CD4-positive, alpha-beta T cell (primary cell): ENCODE measurements at regions of chr15 and their contacts with region 1.

Region 1: DNA sequence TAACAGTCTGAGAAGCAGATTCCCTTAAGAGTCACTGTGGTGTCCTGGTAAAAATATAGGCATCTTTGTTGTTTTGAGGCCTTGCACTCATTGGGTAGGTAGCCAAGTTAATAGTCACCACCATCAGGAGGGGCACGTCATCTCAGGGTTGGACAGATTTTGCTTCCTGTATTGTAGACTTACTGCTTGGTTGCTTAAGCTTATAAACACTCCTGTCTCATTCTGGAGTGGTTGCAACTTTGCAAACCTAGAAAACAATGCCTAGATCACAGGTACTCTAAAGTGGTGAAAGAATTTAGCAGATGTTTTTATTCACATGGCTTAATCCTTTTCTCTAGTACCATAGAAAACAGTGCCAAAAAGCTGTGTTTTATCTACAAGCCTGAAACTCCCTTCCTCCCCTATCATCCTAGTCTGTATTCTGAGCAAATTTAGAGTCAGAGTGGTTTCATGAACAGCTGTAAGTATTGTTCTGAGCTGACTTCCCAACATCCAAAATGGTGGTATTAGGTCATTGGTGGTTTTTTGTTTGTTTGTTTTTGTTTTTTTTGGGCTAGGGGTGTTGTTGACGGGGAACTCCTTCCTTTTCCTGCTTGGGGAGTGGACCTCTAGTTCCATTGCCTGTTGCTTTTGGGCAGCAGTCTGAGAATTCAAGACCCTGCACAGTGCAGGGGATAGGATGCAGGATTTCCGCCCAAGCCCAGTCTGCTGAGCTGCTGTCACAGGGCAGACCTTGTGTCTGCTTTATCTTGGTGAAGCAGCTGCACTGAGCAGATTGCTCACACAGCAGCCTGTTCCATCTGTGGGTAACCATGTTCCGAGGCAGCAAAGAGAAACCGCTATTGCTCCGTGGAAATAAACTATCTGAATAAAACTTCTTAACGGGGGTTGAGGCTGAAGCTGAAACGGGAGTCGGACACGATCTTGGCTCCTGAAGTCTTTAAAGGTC is 202.0 kb downstream of the AKAP13 start:
- DNase-seq: peak; percentile 43 to 84 (median 66)
- ATAC-seq: peak; percentile 71
- H3K4me3 ChIP-seq: peak overlapping the region; percentile 62
- H3K4me3 Mint-ChIP-seq: peak overlapping the region; percentile 87
- H3K27ac ChIP-seq: peak overlapping the region; percentile 86 to 96
- H3K27ac Mint-ChIP-seq: peak overlapping the region; percentile 100
- H3K4me1 ChIP-seq: peaks cover 64% of the 10 kb centered on the region
- H3K4me1 Mint-ChIP-seq: peaks cover 79% of the 10 kb centered on the region
- H3K27me3 ChIP-seq: no peaks in the 10 kb centered on the region
- H3K27me3 Mint-ChIP-seq: no peaks in the 10 kb centered on the region
- CTCF ChIP-seq: no peak

Region 2: GRCh38 chr15:85543741-85544155 is 38.7 kb before region 1 on chr15:
- CTCF ChIA-PET with region 1: interaction called, 6 read pairs
- POLR2A ChIA-PET with region 1: interaction called, 10 read pairs
- intact Hi-C with region 1: loop called in 1 of 2 experiments (anchors 2 kb)
- DNase-seq: peak in 13 of 14 experiments; percentile 5 to 72 (median 37)
- ATAC-seq: peak; percentile 90
- H3K4me3 ChIP-seq: peak overlapping the region; percentile 18
- H3K4me3 Mint-ChIP-seq: peak overlapping the region; percentile 52
- H3K27ac ChIP-seq: no peak overlapping the region
- H3K27ac Mint-ChIP-seq: peak overlapping the region; percentile 77
- H3K4me1 ChIP-seq: peaks cover 14% of the 10 kb centered on the region
- H3K4me1 Mint-ChIP-seq: peaks cover 82% of the 10 kb centered on the region
- H3K27me3 ChIP-seq: no peaks in the 10 kb centered on the region
- H3K27me3 Mint-ChIP-seq: no peaks in the 10 kb centered on the region
- CTCF ChIP-seq: peak; percentile 19

Region 3: DNA sequence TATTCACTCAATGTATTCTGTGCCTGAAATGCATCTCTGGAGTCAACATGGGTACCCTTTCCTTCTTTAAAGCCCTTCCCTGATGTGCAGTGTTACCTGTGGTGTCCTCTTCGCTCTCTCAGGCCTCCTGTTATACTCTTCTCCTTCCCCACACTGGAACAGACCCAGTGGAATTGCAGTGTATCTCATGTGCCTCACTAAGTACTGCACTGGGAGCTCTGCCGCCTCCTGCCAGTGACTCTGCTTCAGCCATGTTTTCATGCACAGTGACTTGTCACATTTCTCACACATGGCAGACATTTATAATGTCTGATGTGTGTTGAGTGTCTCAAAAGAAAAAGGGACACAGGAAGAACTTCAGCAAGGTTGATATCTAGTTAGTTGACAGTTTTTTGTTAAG is 21.3 kb after region 1 on chr15:
- CTCF ChIA-PET with region 1: no interaction called
- POLR2A ChIA-PET with region 1: interaction called, 11 read pairs
- intact Hi-C with region 1: no loop called
- DNase-seq: no peak
- ATAC-seq: no peak
- H3K4me3 ChIP-seq: no peak overlapping the region
- H3K4me3 Mint-ChIP-seq: no peak overlapping the region
- H3K27ac ChIP-seq: no peak overlapping the region
- H3K27ac Mint-ChIP-seq: no peak overlapping the region
- H3K4me1 ChIP-seq: peaks cover 8% of the 10 kb centered on the region
- H3K4me1 Mint-ChIP-seq: peaks cover 40% of the 10 kb centered on the region
- H3K27me3 ChIP-seq: no peaks in the 10 kb centered on the region
- H3K27me3 Mint-ChIP-seq: no peaks in the 10 kb centered on the region
- CTCF ChIP-seq: no peak

Region 4: DNA sequence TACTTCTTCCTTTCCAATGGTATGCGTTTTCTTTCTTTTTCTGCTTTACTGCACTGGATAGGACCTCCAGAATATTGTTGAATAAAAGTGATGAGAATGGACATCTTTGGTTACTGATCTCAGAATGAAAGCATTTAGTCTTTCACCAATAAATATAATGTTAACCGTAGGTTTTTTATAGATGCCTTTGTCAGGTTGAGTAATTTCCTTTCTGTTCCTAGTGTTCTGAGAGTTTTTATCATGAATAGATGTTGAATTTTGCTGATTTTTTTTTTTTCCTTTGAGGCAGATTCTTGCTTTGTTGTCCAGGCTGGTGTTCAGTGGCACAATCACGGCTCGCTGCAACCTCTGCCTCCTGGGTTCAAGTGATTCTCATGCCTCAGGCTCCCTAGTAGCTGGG is 53.9 kb after region 1 on chr15:
- CTCF ChIA-PET with region 1: no interaction called
- POLR2A ChIA-PET with region 1: no interaction called
- intact Hi-C with region 1: no loop called
- DNase-seq: no peak
- ATAC-seq: no peak
- H3K4me3 ChIP-seq: no peak overlapping the region
- H3K4me3 Mint-ChIP-seq: no peak overlapping the region
- H3K27ac ChIP-seq: no peak overlapping the region
- H3K27ac Mint-ChIP-seq: no peak overlapping the region
- H3K4me1 ChIP-seq: no peaks in the 10 kb centered on the region
- H3K4me1 Mint-ChIP-seq: peaks cover 36% of the 10 kb centered on the region
- H3K27me3 ChIP-seq: no peaks in the 10 kb centered on the region
- H3K27me3 Mint-ChIP-seq: no peaks in the 10 kb centered on the region
- CTCF ChIP-seq: no peak

Region 5: GRCh38 chr15:85646538-85647091 is 64.2 kb after region 1 on chr15:
- CTCF ChIA-PET with region 1: no interaction called
- POLR2A ChIA-PET with region 1: interaction called, 19 read pairs
- intact Hi-C with region 1: loop called in 1 of 2 experiments (anchors 5 kb)
- DNase-seq: peak in 6 of 14 experiments; percentile 7 to 81 (median 48)
- ATAC-seq: peak; percentile 85
- H3K4me3 ChIP-seq: no peak overlapping the region
- H3K4me3 Mint-ChIP-seq: peak overlapping the region; percentile 9
- H3K27ac ChIP-seq: peak overlapping the region in 1 of 2 donors; percentile 71
- H3K27ac Mint-ChIP-seq: peak overlapping the region; percentile 73
- H3K4me1 ChIP-seq: peaks cover 40% of the 10 kb centered on the region
- H3K4me1 Mint-ChIP-seq: peaks cover 61% of the 10 kb centered on the region
- H3K27me3 ChIP-seq: no peaks in the 10 kb centered on the region
- H3K27me3 Mint-ChIP-seq: no peaks in the 10 kb centered on the region
- CTCF ChIP-seq: no peak

Region 6: DNA sequence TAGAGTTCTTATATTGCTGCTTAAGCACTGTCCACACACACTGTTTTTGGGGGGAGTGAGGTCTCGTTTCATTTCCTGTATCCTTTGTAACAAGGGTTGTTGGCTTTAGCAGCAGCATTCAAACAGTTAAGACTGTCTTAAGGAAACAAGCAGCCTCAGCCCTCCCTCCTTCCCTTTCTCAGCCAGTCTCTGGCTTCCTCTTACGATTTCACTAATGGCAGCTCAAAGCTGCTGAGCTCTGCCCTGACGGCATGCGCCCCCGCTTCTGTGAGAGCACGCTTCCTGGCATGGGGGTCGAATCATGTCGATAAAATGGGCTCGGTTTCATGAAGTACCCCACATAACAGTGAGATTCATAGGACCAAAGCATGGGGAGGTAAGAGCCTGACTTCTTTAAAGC is 107.3 kb after region 1 on chr15:
- CTCF ChIA-PET with region 1: interaction called, 3 read pairs
- POLR2A ChIA-PET with region 1: interaction called, 27 read pairs
- intact Hi-C with region 1: no loop called
- DNase-seq: peak; percentile 46 to 88 (median 60)
- ATAC-seq: peak; percentile 86
- H3K4me3 ChIP-seq: peak overlapping the region; percentile 66
- H3K4me3 Mint-ChIP-seq: peak overlapping the region; percentile 97
- H3K27ac ChIP-seq: peak overlapping the region; percentile 77 to 84
- H3K27ac Mint-ChIP-seq: peak overlapping the region; percentile 93
- H3K4me1 ChIP-seq: peaks cover 51% of the 10 kb centered on the region
- H3K4me1 Mint-ChIP-seq: peaks cover 76% of the 10 kb centered on the region
- H3K27me3 ChIP-seq: no peaks in the 10 kb centered on the region
- H3K27me3 Mint-ChIP-seq: no peaks in the 10 kb centered on the region
- CTCF ChIP-seq: peak; percentile 6